Right ventricle myocardium superior (tissue), 1 donor: ENCODE measurements at regions of chr10 and their contacts with region 1.

Region 1: GRCh38 chr10:27319752-27320561 is 79.4 kb upstream of the ACBD5 start:
- DNase-seq: peak; percentile 80
- ATAC-seq: peak; percentile 89

Region 2: DNA sequence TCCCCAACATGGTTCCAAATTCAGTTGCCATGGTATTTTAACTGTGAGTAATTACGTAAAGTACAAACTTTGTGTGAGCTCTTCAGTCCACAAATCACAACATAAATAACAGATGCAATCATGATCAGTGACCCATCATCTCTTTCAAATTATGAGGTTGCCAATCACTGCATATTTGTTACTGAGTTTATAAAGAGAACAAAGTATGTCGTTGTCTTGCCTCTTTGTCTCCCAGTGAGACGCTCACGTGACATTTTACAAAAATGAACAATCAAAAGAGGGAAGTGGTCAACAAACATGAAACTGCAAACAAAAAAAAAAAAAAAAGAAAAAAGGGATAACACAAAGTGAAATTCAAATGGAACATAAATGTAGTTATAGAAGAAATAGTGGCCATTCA is 745.2 kb before region 1 on chr10:
- intact Hi-C with region 1: loop called (anchors 5 kb)
- DNase-seq: no peak
- ATAC-seq: no peak

Region 3: DNA sequence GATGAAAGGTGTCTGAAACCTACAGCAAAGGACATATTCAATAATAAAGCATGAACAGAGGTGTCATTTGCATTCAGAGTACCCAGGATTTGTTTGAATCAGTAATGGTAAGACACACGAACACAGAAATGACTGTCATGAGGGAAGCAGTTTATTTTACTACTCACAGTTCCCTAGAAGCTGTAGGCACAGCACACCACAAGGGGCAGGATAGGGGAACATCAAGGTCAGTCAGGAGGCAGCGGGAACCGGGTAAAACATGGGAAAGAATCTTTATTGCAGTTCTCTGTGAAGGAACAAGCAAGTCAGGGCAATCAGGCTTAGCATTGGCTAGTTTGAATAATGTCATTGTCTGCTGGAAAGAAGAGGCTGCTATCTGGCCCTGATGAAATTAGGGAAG is 692.6 kb before region 1 on chr10:
- intact Hi-C with region 1: loop called (anchors 5 kb)
- DNase-seq: no peak
- ATAC-seq: no peak